ENCODE measurements at regions of chr12 and their contacts with region 1.

Region 1: GRCh38 chr12:48165094-48165981 is 8.0 kb upstream of the ASB8 start:
- DNase-seq: no peak
- H3K4me3 ChIP-seq: no peak overlapping the region
- CTCF ChIP-seq: peak; percentile 78

Region 2: DNA sequence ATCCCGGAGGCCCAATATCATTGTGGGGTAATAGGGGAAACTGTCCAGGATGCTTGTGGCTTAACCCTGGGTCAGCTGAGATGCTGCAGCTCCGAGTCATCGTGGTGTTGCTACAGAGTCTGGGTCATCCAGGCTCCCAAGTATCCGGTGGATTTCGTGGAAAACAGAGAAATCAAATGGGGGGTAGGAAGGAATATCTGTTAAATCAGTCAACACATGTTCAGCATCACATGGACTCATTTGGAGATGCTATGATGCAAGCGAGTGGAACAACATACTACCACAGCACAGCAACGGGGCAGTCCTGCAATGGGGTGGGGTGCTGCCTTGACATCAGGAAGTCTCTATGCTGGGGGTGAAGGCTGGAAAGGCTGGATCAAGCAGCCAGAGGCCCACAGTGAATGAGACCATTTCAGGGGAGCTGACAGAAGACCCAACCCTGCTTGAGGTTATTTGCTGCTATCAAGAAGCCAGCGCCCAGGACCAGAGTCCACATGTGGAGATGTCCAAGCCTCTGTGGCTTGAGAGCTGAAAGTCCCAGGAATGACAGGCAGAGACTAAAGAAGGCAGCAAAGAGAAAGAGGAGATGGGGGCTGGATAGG is 283.4 kb before region 1 on chr12:
- CTCF ChIA-PET with region 1: no interaction called
- POLR2A ChIA-PET with region 1: no interaction called
- DNase-seq: peak; percentile 97
- H3K4me3 ChIP-seq: no peak overlapping the region
- CTCF ChIP-seq: no peak

Region 3: DNA sequence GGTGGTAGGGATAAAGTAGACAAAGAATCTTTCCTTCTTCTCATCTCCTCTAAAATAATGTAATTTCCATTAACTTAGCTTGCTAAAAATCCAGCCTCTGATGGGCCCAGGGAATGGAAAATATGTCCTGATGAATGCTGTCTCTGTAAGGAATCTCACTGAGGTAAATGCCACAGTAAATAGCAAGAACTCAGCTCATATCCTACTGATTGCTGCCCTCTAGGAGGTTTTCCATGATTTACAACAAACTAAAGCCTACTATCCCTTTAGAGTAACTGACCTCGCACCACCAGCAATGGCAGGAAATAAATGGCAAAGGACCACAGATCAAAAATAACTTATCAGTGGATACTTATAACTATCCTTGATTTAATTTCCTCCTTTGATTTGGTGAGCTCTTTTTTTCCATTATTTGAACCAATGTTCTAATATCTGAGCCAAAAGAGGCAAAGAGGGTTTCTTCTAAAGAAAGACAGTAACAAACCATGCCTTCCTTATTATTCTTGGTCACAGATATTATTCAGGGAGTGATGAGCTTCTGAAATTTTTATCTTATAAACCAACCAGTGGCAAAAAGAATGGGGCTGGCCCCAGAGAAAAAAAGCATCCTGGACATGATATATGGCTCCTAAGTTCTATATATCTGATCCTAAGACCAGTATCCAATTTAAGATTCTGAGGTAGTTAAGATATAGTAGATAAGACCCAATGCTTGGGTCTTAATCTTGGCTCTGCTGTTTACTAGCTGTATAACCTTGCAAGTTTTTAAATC is 103.2 kb before region 1 on chr12:
- CTCF ChIA-PET with region 1: interaction called, 10 read pairs
- POLR2A ChIA-PET with region 1: no interaction called
- DNase-seq: no peak
- H3K4me3 ChIP-seq: no peak overlapping the region
- CTCF ChIP-seq: no peak

Region 4: DNA sequence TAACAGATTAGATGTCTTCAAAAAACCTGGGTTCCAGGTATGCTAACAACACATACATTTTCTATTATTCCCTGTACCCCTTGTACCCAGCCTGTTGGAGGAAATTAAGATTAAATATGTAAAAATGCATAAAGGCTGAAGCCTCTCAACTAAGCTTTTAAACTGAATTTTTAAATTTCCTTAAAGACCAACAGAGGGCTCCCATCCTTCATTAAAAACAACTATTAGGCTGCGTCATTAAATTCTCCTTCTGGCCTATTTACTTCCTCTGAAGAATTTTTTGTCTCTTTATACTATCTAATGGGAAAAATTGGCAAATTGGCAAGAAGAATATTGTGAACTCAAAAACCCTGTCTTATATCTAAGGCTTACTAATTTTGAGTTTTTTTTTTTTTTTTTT is 81.3 kb before region 1 on chr12:
- CTCF ChIA-PET with region 1: interaction called, 20 read pairs
- POLR2A ChIA-PET with region 1: no interaction called
- DNase-seq: no peak
- H3K4me3 ChIP-seq: no peak overlapping the region
- CTCF ChIP-seq: no peak

Region 5: DNA sequence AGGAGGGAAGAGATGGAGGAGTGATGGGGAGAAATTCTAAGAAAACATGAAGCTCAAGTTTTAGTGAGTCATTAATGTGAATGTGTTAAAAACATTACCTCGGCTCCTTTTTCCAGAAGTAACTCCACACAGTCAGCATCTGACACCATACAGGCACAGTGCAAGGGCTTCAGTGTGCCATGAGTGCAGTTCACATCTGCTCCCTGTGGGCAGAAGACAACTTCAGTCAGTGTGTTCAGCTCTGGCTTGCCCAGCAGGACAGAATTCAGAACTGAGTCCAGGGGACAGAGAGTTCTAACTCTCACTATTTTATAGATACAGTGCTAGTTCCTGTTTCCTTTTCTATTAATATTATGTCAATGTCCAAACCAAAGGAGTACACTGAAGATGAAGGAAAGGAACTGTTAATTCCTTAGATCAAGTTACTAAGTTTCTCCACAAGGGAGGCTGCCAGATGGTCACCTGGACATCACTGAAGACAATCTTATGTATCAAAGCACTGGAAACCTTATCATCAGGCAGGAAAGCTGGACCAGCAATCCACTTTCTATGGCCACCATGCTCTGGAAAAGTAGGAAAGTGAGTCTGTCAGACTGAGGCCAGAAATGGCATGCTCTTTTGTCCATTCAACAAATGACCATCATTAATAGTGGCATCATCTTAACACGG is 14.1 kb before region 1 on chr12:
- CTCF ChIA-PET with region 1: interaction called, 13 read pairs
- POLR2A ChIA-PET with region 1: no interaction called
- DNase-seq: no peak
- H3K4me3 ChIP-seq: no peak overlapping the region
- CTCF ChIP-seq: no peak

Region 6: GRCh38 chr12:48175613-48176416 is 10.5 kb after region 1 on chr12:
- CTCF ChIA-PET with region 1: interaction called, 77 read pairs
- POLR2A ChIA-PET with region 1: no interaction called
- DNase-seq: no peak
- H3K4me3 ChIP-seq: no peak overlapping the region
- CTCF ChIP-seq: no peak

Region 7: GRCh38 chr12:48183091-48183875 is 17.9 kb after region 1 on chr12 and contains the start of gene CCDC184:
- CTCF ChIA-PET with region 1: interaction called, 77 read pairs
- POLR2A ChIA-PET with region 1: no interaction called
- DNase-seq: no peak
- H3K4me3 ChIP-seq: peak within 1 kb of the TSS; percentile 80
- CTCF ChIP-seq: peak; percentile 60

Region 8: GRCh38 chr12:48189331-48190125 is 24.2 kb after region 1 on chr12:
- CTCF ChIA-PET with region 1: interaction called, 11 read pairs
- POLR2A ChIA-PET with region 1: no interaction called
- DNase-seq: no peak
- H3K4me3 ChIP-seq: no peak overlapping the region
- CTCF ChIP-seq: peak; percentile 78

Measured in AG04449 (cell line).